CD4-positive, alpha-beta T cell (primary cell): ENCODE measurements at regions of chr10 and their contacts with region 1.

Region 1: DNA sequence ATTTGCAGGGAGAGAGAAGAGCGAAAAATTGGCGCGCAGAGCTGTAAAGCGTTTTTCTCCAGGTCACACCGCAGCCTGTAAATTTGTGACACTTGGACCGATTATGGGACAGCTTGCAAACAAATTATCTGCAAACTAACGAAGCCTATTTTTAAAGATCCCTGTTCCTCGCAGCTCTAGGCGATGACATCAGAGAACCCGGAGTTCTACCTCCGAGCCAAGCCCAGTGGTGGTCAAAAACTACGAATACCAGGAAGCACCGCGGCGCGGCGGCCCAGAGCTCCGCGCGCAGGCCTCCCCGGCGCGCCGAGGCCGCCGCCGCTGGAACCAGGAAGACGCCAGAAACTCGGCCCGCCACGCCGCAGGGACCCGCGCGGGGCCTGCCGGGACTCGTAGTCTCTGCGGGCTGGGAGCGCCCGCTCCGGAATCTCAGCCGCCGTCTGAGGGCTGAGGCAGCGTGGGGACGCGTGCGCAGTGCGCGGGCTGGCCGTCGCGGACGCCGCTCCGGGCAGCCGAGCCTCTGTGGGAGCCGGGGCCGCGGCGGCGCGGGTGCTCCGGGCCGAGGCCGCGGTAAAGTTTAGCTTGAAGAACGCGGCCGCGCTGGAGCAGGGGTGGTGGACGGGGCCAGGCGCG is at the start of gene PLEKHA1:
- DNase-seq: peak; percentile 85 to 96 (median 92)
- ATAC-seq: peak; percentile 91
- H3K4me3 ChIP-seq: peak within 1 kb of the TSS; percentile 91
- H3K4me3 Mint-ChIP-seq: peak within 1 kb of the TSS; percentile 93
- H3K27ac ChIP-seq: peak within 1 kb of the TSS; percentile 83 to 87
- H3K27ac Mint-ChIP-seq: peak within 1 kb of the TSS; percentile 94
- H3K4me1 ChIP-seq: peaks cover 26% of the 10 kb centered on the region
- H3K4me1 Mint-ChIP-seq: peaks cover 49% of the 10 kb centered on the region
- H3K27me3 ChIP-seq: peaks cover 0 to 8% of the 10 kb centered on the region in 2 experiments
- H3K27me3 Mint-ChIP-seq: peaks cover 10% of the 10 kb centered on the region
- CTCF ChIP-seq: no peak
- total RNA-seq, gene PLEKHA1: 24.9 to 26.8 TPM

Region 2: DNA sequence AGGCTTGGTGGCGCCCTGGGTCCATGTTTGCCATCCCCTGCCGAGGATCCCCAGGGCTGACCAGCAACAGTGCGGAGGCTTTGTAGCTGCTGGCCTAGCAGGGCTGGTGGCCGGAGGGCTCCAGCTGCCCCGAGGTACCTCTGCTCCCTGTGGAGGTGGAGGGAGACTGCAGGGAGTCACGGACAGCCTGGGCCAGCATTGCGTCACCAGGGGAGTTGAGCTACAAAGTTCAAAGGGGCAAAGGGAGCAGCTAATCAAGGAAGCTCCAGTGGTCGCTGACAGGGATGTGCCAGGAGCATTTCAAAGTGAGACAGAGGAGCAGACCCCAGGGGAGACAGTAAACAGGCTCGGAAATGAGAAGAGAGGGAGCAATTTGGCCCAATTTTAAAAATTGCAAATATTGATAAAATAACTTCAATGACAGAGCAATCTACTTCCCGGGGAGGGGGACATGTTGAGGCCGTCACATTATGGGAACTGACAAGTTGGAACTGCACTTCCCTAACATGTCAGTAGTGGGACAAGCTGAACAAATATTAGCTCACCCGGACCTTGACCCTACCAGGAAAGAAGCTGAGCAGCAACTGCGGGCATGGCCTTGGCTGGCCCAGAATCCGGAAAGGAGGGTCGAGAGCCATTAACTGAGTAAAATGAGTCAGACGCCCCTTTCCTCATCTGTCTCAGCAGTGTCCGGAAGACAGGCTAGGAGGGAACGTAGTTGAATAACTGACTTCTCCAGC is 63.9 kb before region 1 on chr10:
- CTCF ChIA-PET with region 1: no interaction called
- POLR2A ChIA-PET with region 1: no interaction called
- intact Hi-C with region 1: no loop called
- DNase-seq: no peak
- ATAC-seq: no peak
- H3K4me3 ChIP-seq: no peak overlapping the region
- H3K4me3 Mint-ChIP-seq: no peak overlapping the region
- H3K27ac ChIP-seq: no peak overlapping the region
- H3K27ac Mint-ChIP-seq: no peak overlapping the region
- H3K4me1 ChIP-seq: no peaks in the 10 kb centered on the region
- H3K4me1 Mint-ChIP-seq: no peaks in the 10 kb centered on the region
- H3K27me3 ChIP-seq: peaks cover 0 to 4% of the 10 kb centered on the region in 2 experiments
- H3K27me3 Mint-ChIP-seq: peaks cover 18% of the 10 kb centered on the region
- CTCF ChIP-seq: no peak

Region 3: DNA sequence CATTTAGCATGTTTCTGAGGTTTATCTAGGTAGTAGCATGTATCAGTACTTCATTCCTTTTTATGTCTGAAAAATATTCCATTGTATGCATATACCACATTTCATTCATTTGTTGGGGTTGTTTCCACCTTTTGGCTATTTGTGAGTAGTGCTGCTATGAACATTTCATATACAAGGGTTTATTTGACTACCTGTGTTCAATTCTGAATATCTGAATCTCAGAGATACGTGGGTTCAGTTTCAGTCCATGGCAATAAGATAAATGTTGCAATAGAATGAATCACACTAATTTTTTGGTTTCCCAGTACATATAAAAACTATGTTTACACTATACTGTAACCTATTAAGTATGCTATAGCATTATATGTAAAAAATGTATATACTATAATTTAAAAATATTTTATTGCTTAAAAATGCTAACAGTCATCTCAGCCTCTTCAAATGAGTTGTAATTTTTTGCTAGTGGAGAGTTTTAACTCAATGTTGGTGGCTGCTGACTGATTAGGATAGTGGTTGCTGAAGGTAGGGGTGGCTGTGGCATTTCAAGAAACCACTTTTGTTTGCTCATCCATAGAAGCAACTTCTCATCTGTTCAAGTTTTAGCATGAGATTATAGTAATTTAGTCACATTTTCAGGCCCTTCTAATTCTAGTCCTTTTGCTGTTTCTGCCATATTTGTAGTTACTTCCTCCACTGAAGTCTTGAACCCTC is 14.1 kb after region 1 on chr10:
- CTCF ChIA-PET with region 1: no interaction called
- POLR2A ChIA-PET with region 1: interaction called, 12 read pairs
- intact Hi-C with region 1: loop called in 1 of 2 experiments (anchors 2 kb)
- DNase-seq: no peak
- ATAC-seq: no peak
- H3K4me3 ChIP-seq: no peak overlapping the region
- H3K4me3 Mint-ChIP-seq: no peak overlapping the region
- H3K27ac ChIP-seq: no peak overlapping the region
- H3K27ac Mint-ChIP-seq: no peak overlapping the region
- H3K4me1 ChIP-seq: peaks cover 4% of the 10 kb centered on the region
- H3K4me1 Mint-ChIP-seq: peaks cover 72% of the 10 kb centered on the region
- H3K27me3 ChIP-seq: no peaks in the 10 kb centered on the region
- H3K27me3 Mint-ChIP-seq: no peaks in the 10 kb centered on the region
- CTCF ChIP-seq: no peak

Region 4: GRCh38 chr10:122419876-122420623 is 45.7 kb after region 1 on chr10:
- CTCF ChIA-PET with region 1: interaction called, 3 read pairs
- POLR2A ChIA-PET with region 1: interaction called, 32 read pairs
- intact Hi-C with region 1: loop called (anchors 1 to 5 kb)
- DNase-seq: peak in 1 of 14 experiments; percentile 31
- ATAC-seq: no peak
- H3K4me3 ChIP-seq: no peak overlapping the region
- H3K4me3 Mint-ChIP-seq: no peak overlapping the region
- H3K27ac ChIP-seq: no peak overlapping the region
- H3K27ac Mint-ChIP-seq: peak overlapping the region; percentile 73
- H3K4me1 ChIP-seq: peaks cover 39% of the 10 kb centered on the region
- H3K4me1 Mint-ChIP-seq: peaks cover 91% of the 10 kb centered on the region
- H3K27me3 ChIP-seq: no peaks in the 10 kb centered on the region
- H3K27me3 Mint-ChIP-seq: no peaks in the 10 kb centered on the region
- CTCF ChIP-seq: no peak

Region 5: DNA sequence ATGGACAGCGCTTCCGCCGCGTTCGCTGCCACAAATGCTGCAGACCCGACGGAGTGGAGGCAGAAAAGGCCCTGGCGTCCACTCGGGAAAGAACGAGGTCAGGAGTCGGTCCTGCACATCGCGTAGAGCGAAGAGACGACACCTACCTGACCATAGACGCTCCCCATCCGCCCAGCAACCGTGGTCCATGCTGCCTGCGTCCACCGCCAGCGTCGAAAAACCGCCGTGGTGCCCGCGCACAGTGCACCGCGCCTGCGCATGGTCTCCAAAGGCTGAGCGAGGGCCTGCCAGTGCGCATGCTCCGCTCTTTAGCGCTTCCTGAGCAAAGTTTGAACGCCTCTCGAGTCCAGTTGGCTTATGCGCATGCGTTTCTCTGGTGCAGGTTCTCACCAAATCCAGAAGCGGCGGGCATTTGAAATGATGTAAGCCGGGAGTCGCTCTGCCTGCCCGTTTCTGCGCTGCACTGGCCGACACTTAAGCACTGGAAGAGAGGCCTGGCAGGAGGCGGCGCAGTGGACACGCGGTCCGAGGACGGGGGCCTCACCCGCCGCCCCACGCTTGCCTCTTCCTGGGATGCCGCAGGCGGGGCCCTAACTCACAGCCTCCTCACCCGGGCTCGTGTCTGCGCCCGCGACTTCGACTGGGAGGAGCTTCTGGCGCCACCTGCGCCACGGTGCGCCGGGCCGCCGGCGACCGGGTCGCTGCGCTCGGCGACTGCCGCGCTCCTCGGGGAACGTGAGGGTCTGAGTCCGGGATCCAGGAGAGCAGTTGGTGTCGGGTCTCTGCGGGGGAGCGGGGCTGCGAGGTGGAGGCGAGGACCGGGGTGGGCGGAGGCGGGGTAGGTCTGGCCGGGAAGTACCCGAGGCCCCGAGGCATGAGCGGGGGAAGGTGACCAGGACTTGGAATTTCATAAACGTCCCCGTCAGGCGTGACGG is 505.3 kb after region 1 on chr10 and contains the start of gene FAM24B:
- CTCF ChIA-PET with region 1: no interaction called
- POLR2A ChIA-PET with region 1: interaction called, 3 read pairs
- intact Hi-C with region 1: loop called in 1 of 2 experiments (anchors 5 kb)
- DNase-seq: peak; percentile 87 to 98 (median 94)
- ATAC-seq: peak; percentile 84
- H3K4me3 ChIP-seq: peak within 1 kb of the TSS; percentile 80
- H3K4me3 Mint-ChIP-seq: peak within 1 kb of the TSS; percentile 86
- H3K27ac ChIP-seq: peak within 1 kb of the TSS; percentile 70 to 75
- H3K27ac Mint-ChIP-seq: peak within 1 kb of the TSS; percentile 79
- H3K4me1 ChIP-seq: peaks cover 19% of the 10 kb centered on the region
- H3K4me1 Mint-ChIP-seq: peaks cover 55% of the 10 kb centered on the region
- H3K27me3 ChIP-seq: no peaks in the 10 kb centered on the region
- H3K27me3 Mint-ChIP-seq: no peaks in the 10 kb centered on the region
- CTCF ChIP-seq: no peak
- total RNA-seq, gene FAM24B: 6.8 to 7.1 TPM

Region 6: DNA sequence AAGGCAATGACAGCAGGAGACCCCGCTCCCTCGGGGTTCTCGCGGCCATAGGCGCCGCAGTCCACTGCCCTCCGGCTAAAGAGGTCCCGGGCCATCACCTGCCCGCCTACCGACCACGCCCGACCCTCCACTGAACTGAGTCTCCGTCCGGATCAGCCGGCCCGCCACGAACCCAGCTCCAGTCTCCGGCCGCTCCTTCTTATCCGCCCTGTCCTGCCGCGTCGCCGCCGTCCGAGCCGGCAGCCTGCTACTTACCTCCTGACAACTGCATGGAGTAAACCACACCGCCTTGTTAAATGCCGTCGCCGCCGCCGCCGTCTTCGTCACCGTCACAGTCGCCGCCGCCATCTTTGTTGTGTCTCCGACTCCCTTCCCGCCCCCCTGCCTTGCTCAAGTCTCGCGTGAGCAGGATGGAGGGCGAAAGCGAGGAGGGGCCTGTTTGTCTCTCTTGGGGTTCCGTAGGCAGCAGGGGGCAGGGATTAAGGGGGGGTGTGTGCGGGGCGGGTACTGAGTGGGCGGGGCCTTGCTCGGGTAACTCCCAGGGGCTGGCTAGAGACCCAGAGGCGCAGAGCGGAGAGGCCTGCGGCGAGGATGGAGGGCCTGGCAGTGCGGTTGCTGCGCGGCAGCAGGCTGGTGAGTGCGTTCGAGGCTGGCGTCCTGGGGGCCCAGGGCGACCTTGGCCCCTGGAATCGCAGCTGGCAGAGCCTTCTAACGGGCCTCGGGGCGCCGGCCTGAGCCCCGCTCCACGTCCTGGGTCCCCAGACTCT is 634.3 kb after region 1 on chr10 and contains the starts of genes ACADSB and IKZF5:
- CTCF ChIA-PET with region 1: no interaction called
- POLR2A ChIA-PET with region 1: interaction called, 7 read pairs
- intact Hi-C with region 1: loop called in 1 of 2 experiments (anchors 10 kb)
- DNase-seq: peak; percentile 93 to 99 (median 94)
- ATAC-seq: peak; percentile 86
- H3K4me3 ChIP-seq: peak within 1 kb of the TSS; percentile 91
- H3K4me3 Mint-ChIP-seq: peak within 1 kb of the TSS; percentile 97
- H3K27ac ChIP-seq: peak within 1 kb of the TSS; percentile 94 to 99
- H3K27ac Mint-ChIP-seq: peak within 1 kb of the TSS; percentile 95
- H3K4me1 ChIP-seq: peaks cover 22% of the 10 kb centered on the region
- H3K4me1 Mint-ChIP-seq: peaks cover 68% of the 10 kb centered on the region
- H3K27me3 ChIP-seq: no peaks in the 10 kb centered on the region
- H3K27me3 Mint-ChIP-seq: no peaks in the 10 kb centered on the region
- CTCF ChIP-seq: no peak
- total RNA-seq, gene ACADSB: 16.6 to 17.9 TPM
- total RNA-seq, gene IKZF5: 81.8 to 87.1 TPM